ENCODE measurements at regions of chr17 and their contacts with region 1.

Region 1: GRCh38 chr17:40443583-40444327 is 505 bp downstream of the IGFBP4 start:
- DNase-seq: peak; percentile 44 to 83 (median 68)
- H3K4me3 ChIP-seq: peak overlapping the region; percentile 39 to 76 (median 61)
- H3K27ac ChIP-seq: peak overlapping the region in 44 of 59 donors; percentile 8 to 91 (median 71)
- H3K27me3 ChIP-seq: no peaks in the 10 kb centered on the region
- CTCF ChIP-seq: peak in 45 of 56 donors; percentile 13 to 56 (median 31)

Region 2: GRCh38 chr17:40417609-40418427 is 25.9 kb before region 1 on chr17 and contains the start of gene TOP2A:
- intact Hi-C with region 1: loop called in 1 of 2 experiments (anchors 2 kb)
- DNase-seq: peak; percentile 81 to 99 (median 96)
- H3K4me3 ChIP-seq: peak within 1 kb of the TSS; percentile 40 to 88 (median 68)
- H3K27ac ChIP-seq: peak within 1 kb of the TSS in 18 of 59 donors; percentile 25 to 80 (median 50)
- H3K27me3 ChIP-seq: peaks cover 0 to 18% (median 7%) of the 10 kb centered on the region in 45 donors
- CTCF ChIP-seq: peak in 11 of 56 donors; percentile 8 to 42 (median 20)
- total RNA-seq, gene TOP2A: 0.04 to 3.1 (median 0.42) TPM in 55 of 120 experiments, not detected in the others

Region 3: DNA sequence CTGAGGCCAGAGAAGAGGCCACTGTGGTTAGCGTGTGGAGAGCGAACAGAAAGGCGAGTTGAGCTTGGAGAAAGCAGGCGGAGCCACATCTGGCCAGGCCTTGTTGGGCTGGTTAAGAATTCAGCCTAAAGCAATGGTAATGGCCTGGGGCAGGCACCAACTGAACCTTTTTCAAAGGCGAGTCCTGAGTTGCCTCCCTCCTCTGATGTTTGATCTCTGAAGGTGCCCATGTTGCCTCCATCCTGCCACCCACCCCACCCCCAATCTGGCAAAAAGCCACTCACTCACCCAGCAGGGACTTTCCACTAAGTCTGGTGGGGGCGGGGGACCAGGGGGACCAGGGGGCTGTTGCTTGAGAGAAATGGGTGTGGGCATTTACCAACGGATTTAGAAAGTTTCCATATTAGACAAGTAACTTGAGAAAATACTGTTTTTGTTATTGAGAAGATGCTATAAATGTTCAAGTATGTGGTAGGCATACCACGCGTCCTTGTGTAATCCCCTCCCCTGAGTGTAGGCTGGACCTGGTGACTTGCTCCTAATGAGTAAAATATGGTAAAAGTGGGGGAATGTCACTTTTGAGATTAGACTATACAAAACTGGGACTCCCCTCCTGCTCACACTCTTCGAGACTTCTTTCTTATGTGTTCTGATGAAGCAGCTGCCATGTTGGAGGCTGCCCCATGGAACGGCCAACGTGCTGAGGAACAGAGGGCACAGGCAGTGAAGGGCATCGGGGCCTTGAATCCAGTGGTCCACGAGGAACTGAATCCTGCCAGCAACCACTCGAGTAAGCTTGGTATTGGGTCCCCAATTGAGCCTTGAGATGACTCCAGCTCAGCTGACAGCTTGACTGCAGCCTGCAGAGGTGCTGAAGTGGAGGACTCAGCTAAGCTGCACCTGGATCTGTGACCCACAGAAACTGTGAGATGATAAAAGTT is 87.6 kb after region 1 on chr17:
- intact Hi-C with region 1: loop called (anchors 2 kb)
- DNase-seq: peak in 1 of 10 donors; percentile 14
- H3K4me3 ChIP-seq: no peak overlapping the region
- H3K27ac ChIP-seq: no peak overlapping the region
- H3K27me3 ChIP-seq: peaks cover 0 to 4% (median 0%) of the 10 kb centered on the region in 45 donors
- CTCF ChIP-seq: no peak

Measured in dorsolateral prefrontal cortex (tissue), 120 donors.